Pancreas (tissue), 10 donors: ENCODE measurements at regions of chr1 and their contacts with region 1.

Region 1: DNA sequence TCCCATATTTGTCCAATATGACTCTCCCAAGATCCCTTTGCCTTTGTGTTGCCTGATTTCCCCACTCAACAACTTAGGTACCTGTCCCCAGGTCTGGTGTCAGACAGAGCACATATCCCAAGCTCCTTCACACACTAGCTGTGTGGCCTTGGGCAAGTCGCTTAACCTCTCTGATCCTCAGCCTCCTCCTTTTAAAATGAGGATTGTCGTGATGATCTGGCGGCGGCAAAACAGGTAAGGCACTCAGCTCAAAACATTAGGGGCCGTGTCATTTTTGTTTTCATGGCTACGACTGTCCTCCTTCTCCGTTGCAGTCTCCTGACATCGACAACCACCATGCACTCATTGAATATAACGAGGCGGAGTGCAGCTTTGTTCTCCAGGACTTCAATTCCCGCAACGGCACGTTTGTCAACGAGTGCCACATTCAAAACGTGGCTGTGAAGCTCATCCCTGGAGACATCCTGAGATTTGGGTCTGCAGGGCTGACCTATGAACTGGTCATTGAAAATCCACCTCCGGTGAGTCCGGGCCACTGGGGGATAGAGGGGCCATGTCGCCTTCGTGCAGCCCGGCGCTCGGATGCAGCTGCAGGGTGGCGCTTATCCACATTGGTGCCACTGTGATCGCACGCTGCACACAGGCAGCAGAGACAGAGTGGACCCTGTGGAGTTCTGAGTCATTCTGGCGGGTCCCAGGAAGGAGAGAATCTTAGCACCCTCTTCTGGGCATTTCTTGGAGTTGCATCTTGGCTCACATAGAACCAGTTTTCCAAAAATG is 25.2 kb downstream of the FHAD1 start:
- DNase-seq: peak in 5 of 6 donors; percentile 62 to 79 (median 68)
- ATAC-seq: peak; percentile 95 to 99 (median 98)
- H3K4me3 ChIP-seq: no peak overlapping the region
- H3K27ac ChIP-seq: no peak overlapping the region
- H3K4me1 ChIP-seq: peaks cover 0 to 3% (median 0%) of the 10 kb centered on the region in 3 donors
- H3K27me3 ChIP-seq: no peaks in the 10 kb centered on the region
- CTCF ChIP-seq: peak; percentile 62 to 77 (median 63)

Region 2: DNA sequence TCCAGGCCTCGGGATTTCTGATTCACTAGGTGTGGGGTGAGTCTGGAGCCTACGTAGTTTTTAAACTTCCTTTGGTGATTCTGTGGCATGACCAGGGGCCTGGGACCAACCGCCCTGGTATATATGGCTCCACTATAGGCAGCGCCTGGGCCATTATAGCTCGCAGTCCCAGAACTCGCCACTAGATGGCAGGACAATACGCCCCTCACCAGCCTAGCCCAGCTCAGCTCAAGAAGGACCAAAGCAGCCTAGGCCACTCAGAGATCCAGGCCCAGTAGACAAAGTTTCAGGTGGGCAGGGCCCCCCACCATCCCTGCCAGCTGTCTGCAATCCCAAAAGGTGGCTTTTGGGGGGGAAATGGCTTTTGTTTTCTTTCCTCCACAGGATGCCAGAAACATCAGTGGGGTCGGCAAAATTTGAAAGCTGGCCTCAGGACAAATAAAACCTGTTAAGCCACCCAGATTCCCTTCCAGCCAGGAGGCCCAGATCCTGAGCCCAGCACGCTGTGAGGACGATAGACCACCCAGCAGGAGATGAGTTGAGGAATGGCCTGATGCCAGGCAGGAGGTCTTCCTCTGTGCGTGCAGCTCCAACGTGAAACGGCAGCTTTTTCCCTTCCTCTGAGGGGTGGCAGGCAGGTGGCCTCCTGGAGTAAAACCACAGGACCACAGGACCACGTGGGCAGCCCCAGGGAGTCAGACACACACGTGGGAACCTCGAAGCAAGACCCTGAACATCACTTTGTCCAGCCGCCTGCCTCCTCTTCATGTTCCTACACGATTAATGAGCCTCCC is 143.5 kb before region 1 on chr1:
- intact Hi-C with region 1: loop called in 1 of 3 experiments (anchors 5 kb)
- DNase-seq: peak; percentile 62 to 89 (median 81)
- ATAC-seq: peak; percentile 83 to 95 (median 91)
- H3K4me3 ChIP-seq: no peak overlapping the region
- H3K27ac ChIP-seq: peak overlapping the region in 1 of 4 donors; percentile 39
- H3K4me1 ChIP-seq: peaks cover 5 to 10% (median 9%) of the 10 kb centered on the region in 3 donors
- H3K27me3 ChIP-seq: no peaks in the 10 kb centered on the region
- CTCF ChIP-seq: peak; percentile 81 to 93 (median 84)

Region 3: GRCh38 chr1:15141935-15142539 is 130.2 kb before region 1 on chr1:
- intact Hi-C with region 1: loop called in 1 of 3 experiments (anchors 10 kb)
- DNase-seq: peak; percentile 83 to 99 (median 97)
- ATAC-seq: peak; percentile 76 to 92 (median 84)
- H3K4me3 ChIP-seq: no peak overlapping the region
- H3K27ac ChIP-seq: peak overlapping the region; percentile 37 to 83 (median 70)
- H3K4me1 ChIP-seq: peaks cover 52 to 83% (median 52%) of the 10 kb centered on the region in 3 donors
- H3K27me3 ChIP-seq: no peaks in the 10 kb centered on the region
- CTCF ChIP-seq: peak in 2 of 4 donors; percentile 7 to 10

Region 4: DNA sequence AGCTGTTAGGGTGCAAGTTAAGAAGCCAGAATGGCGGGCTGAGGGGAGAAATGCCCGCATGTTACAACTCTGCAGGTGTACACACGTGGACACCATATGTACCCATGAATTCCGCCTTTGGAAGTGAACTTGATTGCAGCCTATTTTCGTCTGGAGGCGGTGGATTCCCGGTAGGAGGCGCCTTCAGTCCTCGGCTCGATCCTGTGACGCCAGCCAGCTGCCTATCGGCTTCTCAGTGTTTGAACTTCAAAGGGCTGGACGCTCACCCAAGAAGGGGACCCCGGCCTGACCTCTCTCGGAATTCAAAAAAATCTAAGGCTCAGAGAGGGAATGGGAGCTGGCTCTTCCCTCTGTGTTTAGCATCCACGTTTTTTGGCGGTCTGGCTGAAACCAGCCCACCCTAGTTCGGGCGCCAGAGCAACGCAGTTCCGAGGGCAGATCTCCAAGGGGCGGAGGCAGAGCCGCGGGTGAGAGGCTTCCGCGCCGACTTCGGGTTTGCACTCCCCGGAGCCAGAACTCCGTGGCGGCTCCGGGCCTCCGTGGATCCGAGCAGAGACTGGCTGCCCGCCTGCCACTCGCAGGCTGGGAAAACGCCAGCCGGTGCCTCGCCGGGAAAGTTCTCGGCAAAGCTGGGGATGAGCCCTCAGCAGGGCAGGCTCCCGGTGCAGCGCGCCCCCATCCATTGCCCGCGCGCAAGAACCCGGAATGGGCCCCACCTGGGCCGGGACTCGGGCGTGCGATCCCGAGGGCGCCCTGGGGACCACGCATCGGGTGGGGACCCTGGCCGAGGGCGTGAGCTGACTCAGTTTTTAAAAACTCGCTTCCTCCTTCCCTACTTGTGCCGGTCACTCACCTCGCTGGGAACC is 119.6 kb before region 1 on chr1:
- intact Hi-C with region 1: loop called in 2 of 3 experiments (anchors 10 kb)
- DNase-seq: peak; percentile 88 to 95 (median 92)
- ATAC-seq: peak; percentile 58 to 74 (median 67)
- H3K4me3 ChIP-seq: peak overlapping the region; percentile 72 to 97 (median 88)
- H3K27ac ChIP-seq: peak overlapping the region; percentile 95 to 100 (median 99)
- H3K4me1 ChIP-seq: peaks cover 20 to 46% (median 20%) of the 10 kb centered on the region in 3 donors
- H3K27me3 ChIP-seq: no peaks in the 10 kb centered on the region
- CTCF ChIP-seq: peak in 3 of 4 donors; percentile 14 to 52 (median 32)

Region 5: GRCh38 chr1:15168479-15168878 is 103.7 kb before region 1 on chr1:
- intact Hi-C with region 1: no loop called
- DNase-seq: peak in 1 of 6 donors; percentile 54
- ATAC-seq: peak; percentile 54 to 78 (median 70)
- H3K4me3 ChIP-seq: no peak overlapping the region
- H3K27ac ChIP-seq: peak overlapping the region; percentile 0 to 73 (median 44)
- H3K4me1 ChIP-seq: peaks cover 45 to 76% (median 53%) of the 10 kb centered on the region in 3 donors
- H3K27me3 ChIP-seq: no peaks in the 10 kb centered on the region
- CTCF ChIP-seq: no peak

Region 6: DNA sequence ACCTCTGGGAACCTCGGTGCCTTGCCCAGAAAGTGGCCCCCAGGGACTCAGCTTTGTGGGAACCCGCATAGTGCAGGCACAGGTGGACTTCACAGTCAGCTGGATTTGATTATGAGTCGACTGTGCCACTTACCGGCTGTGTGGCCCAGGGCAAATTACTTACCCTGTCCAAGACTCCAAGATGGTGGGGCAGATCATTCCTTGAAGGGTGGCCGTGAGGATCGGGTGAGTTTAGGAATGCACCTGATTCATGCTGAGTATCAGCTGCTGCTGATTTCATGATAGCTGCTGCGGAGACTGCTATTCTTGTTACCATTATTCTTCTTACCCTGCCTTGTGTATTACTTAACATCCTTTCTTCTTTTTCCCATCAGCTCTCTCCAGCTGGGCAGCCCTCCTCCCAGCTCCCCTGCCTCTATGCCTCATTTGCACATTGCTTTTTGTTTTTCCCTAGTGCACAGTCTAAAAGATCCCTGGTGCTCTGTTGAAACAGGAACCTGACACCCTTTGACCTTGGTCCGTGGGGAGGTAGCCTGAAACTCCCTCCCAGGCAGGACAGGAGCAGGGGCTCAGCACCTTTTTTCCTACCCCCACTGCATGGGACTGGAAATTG is 65.7 kb before region 1 on chr1:
- intact Hi-C with region 1: loop called in 1 of 3 experiments (anchors 10 kb)
- DNase-seq: no peak
- ATAC-seq: peak in 3 of 4 donors; percentile 19 to 27 (median 24)
- H3K4me3 ChIP-seq: peak overlapping the region in 1 of 4 donors; percentile 18
- H3K27ac ChIP-seq: peak overlapping the region; percentile 2 to 75 (median 52)
- H3K4me1 ChIP-seq: peaks cover 45 to 86% (median 65%) of the 10 kb centered on the region in 3 donors
- H3K27me3 ChIP-seq: no peaks in the 10 kb centered on the region
- CTCF ChIP-seq: no peak

Region 7: GRCh38 chr1:15329104-15329820 is 57.1 kb after region 1 on chr1:
- intact Hi-C with region 1: no loop called
- DNase-seq: peak in 5 of 6 donors; percentile 68 to 78 (median 74)
- ATAC-seq: peak; percentile 79 to 87 (median 81)
- H3K4me3 ChIP-seq: no peak overlapping the region
- H3K27ac ChIP-seq: peak overlapping the region; percentile 49 to 67 (median 58)
- H3K4me1 ChIP-seq: peaks cover 10 to 16% (median 15%) of the 10 kb centered on the region in 3 donors
- H3K27me3 ChIP-seq: no peaks in the 10 kb centered on the region
- CTCF ChIP-seq: peak in 1 of 4 donors; percentile 26